PC-9 (cell line): ENCODE measurements at regions of chr19 and their contacts with region 1.

Region 1: GRCh38 chr19:53659292-53659691 is 27.5 kb downstream of the DPRX start:
- DNase-seq: peak; percentile 9 to 68
- H3K4me3 ChIP-seq: no peak overlapping the region
- H3K27ac ChIP-seq: no peak overlapping the region
- H3K4me1 ChIP-seq: peaks cover 5% of the 10 kb centered on the region; the same call in 1 of the 2 replicates
- H3K27me3 ChIP-seq: no peaks in the 10 kb centered on the region
- CTCF ChIP-seq: peak; percentile 51

Region 2: GRCh38 chr19:53183146-53183764 is 476.0 kb before region 1 on chr19:
- CTCF ChIA-PET with region 1: interaction called, 12 read pairs
- POLR2A ChIA-PET with region 1: no interaction called
- intact Hi-C with region 1: no loop called
- DNase-seq: peak in 1 of 2 experiments; percentile 19
- H3K4me3 ChIP-seq: no peak overlapping the region
- H3K27ac ChIP-seq: no peak overlapping the region
- H3K4me1 ChIP-seq: no peaks in the 10 kb centered on the region
- H3K27me3 ChIP-seq: no peaks in the 10 kb centered on the region
- CTCF ChIP-seq: no peak

Region 3: GRCh38 chr19:53492153-53492552 is 167.1 kb before region 1 on chr19:
- CTCF ChIA-PET with region 1: no interaction called
- POLR2A ChIA-PET with region 1: no interaction called
- intact Hi-C with region 1: no loop called
- DNase-seq: no peak
- H3K4me3 ChIP-seq: no peak overlapping the region
- H3K27ac ChIP-seq: no peak overlapping the region
- H3K4me1 ChIP-seq: no peaks in the 10 kb centered on the region
- H3K27me3 ChIP-seq: no peaks in the 10 kb centered on the region
- CTCF ChIP-seq: no peak

Region 4: DNA sequence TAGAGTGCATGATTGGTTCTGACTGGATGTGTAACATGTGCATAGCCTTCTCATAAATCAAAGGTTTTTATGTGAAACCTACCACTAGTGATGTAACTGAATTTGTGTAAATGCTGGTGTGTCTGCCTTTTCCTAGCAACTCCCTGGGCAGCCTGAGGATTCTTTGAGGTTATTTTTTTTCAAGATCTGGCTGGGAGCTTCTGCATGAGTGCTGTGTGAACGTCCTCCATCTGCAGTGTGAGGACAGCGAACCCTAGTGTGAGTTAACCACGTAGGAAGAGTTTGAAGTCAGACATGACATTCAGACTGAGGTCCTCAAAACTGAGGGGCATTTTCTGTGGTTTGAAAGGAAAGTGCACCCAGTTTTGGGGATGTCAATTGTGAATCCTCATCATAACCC is 12.4 kb after region 1 on chr19:
- CTCF ChIA-PET with region 1: no interaction called
- POLR2A ChIA-PET with region 1: interaction called, 10 read pairs
- intact Hi-C with region 1: no loop called
- DNase-seq: no peak
- H3K4me3 ChIP-seq: no peak overlapping the region
- H3K27ac ChIP-seq: no peak overlapping the region
- H3K4me1 ChIP-seq: no peaks in the 10 kb centered on the region
- H3K27me3 ChIP-seq: peaks cover 20% of the 10 kb centered on the region
- CTCF ChIP-seq: no peak